ENCODE measurements at regions of chr2 and their contacts with region 1.

Region 1: GRCh38 chr2:43542285-43542937 is 53.4 kb downstream of the THADA start:
- DNase-seq: no peak

Region 2: GRCh38 chr2:42944779-42945415 is 597.5 kb before region 1 on chr2:
- intact Hi-C with region 1: loop called (anchors 5 kb)
- DNase-seq: no peak

Region 3: GRCh38 chr2:43239981-43240761 is 302.2 kb before region 1 on chr2:
- intact Hi-C with region 1: loop called (anchors 10 kb)
- DNase-seq: no peak

Measured in cardiac septum (tissue), 1 donor.